ACHN (cell line): ENCODE measurements at regions of chr7 and their contacts with region 1.

Region 1: GRCh38 chr7:44082541-44083207 is 344 bp upstream of the POLM start:
- DNase-seq: peak; percentile 100

Region 2: DNA sequence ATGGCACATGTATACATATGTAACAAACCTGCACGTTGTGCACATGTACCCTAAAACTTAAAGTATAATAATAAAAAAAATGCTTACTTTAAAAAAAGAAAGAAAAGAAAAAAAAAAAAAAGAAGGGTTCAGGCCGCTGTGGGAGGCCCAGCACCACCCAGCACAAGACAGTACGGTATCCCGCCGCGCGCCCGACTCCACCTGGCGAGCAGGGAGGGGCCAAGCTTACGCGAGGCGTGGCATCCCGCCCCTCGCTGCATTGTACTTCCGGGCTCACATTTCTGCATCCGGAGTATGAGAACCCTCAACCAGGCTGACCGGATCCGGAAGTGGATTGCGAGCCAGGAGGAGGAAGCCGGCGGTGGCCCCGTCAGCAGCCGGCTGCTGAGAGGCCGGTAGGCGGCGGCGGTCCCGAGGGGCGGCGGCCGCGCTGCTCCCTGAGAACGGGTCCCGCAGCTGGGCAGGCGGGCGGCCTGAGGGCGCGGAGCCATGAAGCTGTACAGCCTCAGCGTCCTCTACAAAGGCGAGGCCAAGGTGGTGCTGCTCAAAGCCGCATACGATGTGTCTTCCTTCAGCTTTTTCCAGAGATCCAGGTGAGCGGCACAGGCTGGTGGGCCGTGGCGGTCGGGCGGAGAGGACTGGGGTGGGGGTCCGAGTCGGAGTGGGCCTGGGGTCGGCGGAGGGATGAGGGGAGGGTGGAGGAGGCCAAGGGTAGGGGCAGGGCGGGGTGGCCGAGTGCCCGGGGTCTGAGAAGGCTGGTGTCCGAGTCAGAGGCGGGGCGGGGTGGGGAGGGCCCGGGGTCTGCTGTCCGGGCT is 118.2 kb after region 1 on chr7 and contains the start of gene YKT6:
- in situ Hi-C with region 1: loop called (anchors 25 kb)
- DNase-seq: peak; percentile 100

Region 3: GRCh38 chr7:44565097-44565794 is 482.6 kb after region 1 on chr7:
- in situ Hi-C with region 1: no loop called
- DNase-seq: peak; percentile 72